Calu3 (cell line): ENCODE measurements at regions of chr5 and their contacts with region 1.

Region 1: DNA sequence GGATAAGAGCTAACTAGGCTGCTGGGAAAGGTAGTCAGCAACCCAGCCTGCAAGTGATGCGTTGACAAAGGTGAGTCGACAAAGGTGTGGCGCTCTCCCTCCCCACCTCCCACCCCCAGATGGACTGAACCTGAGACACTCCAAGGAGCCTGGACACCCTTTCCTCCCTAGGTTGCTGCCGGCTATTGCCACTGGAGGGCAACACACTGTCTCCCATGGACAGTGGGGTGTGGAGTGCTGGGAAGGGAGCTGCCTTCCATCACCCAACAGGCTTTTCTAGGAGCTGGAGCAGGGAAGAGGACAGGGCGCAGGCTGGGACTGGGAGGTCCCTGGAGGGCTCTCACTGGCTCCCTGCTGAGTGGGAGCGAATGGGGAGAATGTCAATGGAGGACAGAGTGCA is 75.4 kb upstream of the ARAP3 start:
- DNase-seq: peak; percentile 75
- H3K4me3 Mint-ChIP-seq: no peak overlapping the region
- H3K27ac Mint-ChIP-seq: peak overlapping the region; percentile 9
- H3K4me1 Mint-ChIP-seq: peaks cover 20% of the 10 kb centered on the region
- H3K27me3 Mint-ChIP-seq: peaks cover 61% of the 10 kb centered on the region
- CTCF ChIP-seq: peak; percentile 50

Region 2: GRCh38 chr5:141182248-141182647 is 575.2 kb before region 1 on chr5 and contains the start of gene PCDHB16:
- CTCF ChIA-PET with region 1: no interaction called
- intact Hi-C with region 1: no loop called
- DNase-seq: no peak
- H3K4me3 Mint-ChIP-seq: no peak within 1 kb of the TSS
- H3K27ac Mint-ChIP-seq: no peak within 1 kb of the TSS
- H3K4me1 Mint-ChIP-seq: no peaks in the 10 kb centered on the region
- H3K27me3 Mint-ChIP-seq: no peaks in the 10 kb centered on the region
- CTCF ChIP-seq: no peak
- total RNA-seq, gene PCDHB16: 0.35 and 0.66 TPM in 2 replicates

Region 3: DNA sequence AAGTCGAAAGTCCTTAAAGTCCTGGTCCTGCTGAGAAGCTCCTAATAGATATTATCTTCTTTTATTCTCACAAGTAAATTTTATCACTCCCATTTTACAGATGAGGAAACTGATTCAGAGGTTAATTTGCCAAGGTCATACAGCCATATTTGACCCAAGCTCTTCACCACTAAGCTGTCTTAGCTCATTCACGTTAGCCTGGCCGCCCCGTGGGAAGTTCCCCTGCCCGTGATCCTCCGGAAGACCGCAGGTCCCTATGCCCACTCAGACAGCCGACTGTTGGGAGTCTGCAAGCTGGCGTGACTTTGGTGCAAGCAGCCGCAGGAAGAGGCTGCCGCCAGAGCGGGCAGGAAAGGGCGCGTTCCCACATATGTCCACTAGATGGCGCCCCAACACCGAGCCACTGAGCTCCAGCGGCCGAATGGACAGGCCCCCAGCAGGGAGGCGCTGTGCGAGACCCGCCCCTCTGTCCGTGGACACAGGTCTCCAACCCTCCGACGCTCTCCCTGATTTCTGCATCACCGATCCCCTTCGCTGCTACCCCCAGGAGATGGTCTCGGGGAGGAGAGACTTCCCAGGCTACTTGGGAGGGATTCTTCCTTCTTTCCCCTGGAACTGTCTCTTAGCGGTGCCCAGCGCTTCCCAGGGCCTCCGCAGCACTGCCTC is 65.4 kb before region 1 on chr5:
- CTCF ChIA-PET with region 1: interaction called, 11 read pairs
- intact Hi-C with region 1: no loop called
- DNase-seq: peak; percentile 95
- H3K4me3 Mint-ChIP-seq: peak overlapping the region; percentile 69
- H3K27ac Mint-ChIP-seq: no peak overlapping the region
- H3K4me1 Mint-ChIP-seq: peaks cover 35% of the 10 kb centered on the region
- H3K27me3 Mint-ChIP-seq: peaks cover 47% of the 10 kb centered on the region
- CTCF ChIP-seq: peak; percentile 97

Region 4: GRCh38 chr5:141701360-141702119 is 55.9 kb before region 1 on chr5:
- CTCF ChIA-PET with region 1: interaction called, 4 read pairs
- intact Hi-C with region 1: loop called (anchors 5 kb)
- DNase-seq: no peak
- H3K4me3 Mint-ChIP-seq: peak overlapping the region; percentile 58
- H3K27ac Mint-ChIP-seq: no peak overlapping the region
- H3K4me1 Mint-ChIP-seq: peaks cover 2% of the 10 kb centered on the region
- H3K27me3 Mint-ChIP-seq: peaks cover 51% of the 10 kb centered on the region
- CTCF ChIP-seq: no peak

Region 5: DNA sequence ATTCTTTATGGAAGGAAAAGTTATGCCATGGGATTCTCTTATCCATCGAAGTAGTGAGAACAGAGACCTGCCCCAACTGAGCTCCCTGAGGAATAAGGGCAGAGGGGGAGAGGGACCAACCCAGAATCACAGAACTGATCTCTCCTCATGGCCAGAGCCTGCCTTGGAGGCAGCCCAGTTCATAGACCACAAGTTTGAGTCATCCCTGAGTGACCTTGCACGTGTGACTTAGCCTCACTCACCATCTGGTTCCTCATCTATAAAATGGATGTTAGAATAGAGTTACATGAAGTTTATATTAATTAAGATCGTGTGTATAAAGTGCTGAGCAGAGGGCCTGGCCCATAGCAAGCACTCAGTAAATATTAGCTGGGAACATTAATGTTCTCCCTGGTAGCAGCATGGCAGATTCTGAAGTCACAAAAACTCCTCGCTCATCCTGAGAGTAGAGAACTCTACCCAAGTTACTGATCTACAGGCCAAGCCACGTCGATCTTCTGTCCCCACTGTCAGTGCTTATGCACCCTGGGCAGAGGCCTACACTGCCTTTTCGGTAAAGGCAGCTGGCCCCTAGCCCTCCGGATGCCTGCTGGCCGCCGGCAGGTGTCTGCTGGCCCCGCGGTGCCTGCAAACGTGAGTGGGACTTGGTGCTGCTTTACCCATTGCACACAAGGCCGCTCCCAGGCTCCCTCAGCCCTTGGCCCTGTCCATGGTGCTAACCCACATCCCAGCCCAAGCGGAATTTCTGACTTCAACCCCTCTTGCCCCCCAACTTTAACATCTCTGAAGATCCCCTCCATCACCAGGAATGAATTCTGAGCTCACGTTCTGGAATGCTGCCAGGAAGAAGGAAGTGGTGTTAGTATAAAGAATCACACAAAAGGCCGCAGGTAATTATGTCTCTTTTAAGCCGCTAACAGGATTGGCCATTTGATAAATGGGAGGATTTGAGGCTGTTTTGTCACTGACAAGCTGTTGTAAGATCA is 14.2 kb before region 1 on chr5:
- CTCF ChIA-PET with region 1: interaction called, 8 read pairs
- intact Hi-C with region 1: loop called (anchors 1 kb)
- DNase-seq: peak; percentile 72
- H3K4me3 Mint-ChIP-seq: no peak overlapping the region
- H3K27ac Mint-ChIP-seq: no peak overlapping the region
- H3K4me1 Mint-ChIP-seq: no peaks in the 10 kb centered on the region
- H3K27me3 Mint-ChIP-seq: peaks cover 85% of the 10 kb centered on the region
- CTCF ChIP-seq: no peak

Region 6: GRCh38 chr5:141811287-141812155 is 54.1 kb after region 1 on chr5:
- CTCF ChIA-PET with region 1: interaction called, 4 read pairs
- intact Hi-C with region 1: loop called (anchors 2 kb)
- DNase-seq: peak; percentile 23
- H3K4me3 Mint-ChIP-seq: no peak overlapping the region
- H3K27ac Mint-ChIP-seq: no peak overlapping the region
- H3K4me1 Mint-ChIP-seq: no peaks in the 10 kb centered on the region
- H3K27me3 Mint-ChIP-seq: peaks cover 40% of the 10 kb centered on the region
- CTCF ChIP-seq: peak; percentile 70

Region 7: DNA sequence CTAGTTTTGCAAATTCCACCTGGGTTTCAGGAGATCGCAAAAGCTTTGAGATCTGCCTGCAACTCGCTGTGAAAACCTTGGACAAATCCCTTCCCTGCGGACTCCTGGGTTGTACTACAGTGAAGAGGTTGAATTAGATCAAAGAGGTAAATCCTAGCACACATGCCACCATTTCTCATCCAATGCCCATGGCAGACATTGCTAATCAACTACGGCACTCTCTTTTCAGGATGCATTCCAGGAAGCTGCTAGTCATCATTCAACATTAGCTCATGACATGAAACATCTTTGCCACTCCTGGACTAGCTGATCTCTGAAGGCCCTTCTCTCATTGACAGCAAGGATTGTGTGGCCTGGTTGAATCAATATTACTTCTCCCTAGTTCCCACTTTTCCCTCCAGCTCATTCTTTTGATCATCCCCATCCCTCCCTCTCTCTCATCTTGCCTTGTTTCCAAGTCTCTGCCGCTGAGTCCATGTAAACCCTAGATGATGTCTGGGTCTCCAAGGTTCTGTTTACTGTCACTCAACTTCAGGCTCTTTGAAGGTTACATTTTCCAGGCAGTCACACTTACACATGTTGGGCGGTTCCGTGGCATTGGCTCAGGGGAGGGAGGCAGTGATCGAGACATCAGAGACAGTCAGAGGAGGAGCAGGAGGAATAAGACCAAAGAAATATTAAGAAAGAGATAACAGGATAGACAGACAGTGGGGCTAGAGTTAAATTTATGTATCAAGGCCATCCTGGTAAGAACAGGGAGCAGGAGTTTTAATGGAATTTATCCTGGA is 74.9 kb after region 1 on chr5:
- CTCF ChIA-PET with region 1: no interaction called
- intact Hi-C with region 1: loop called (anchors 5 kb)
- DNase-seq: no peak
- H3K4me3 Mint-ChIP-seq: no peak overlapping the region
- H3K27ac Mint-ChIP-seq: peak overlapping the region; percentile 61
- H3K4me1 Mint-ChIP-seq: peaks cover 32% of the 10 kb centered on the region
- H3K27me3 Mint-ChIP-seq: no peaks in the 10 kb centered on the region
- CTCF ChIP-seq: no peak

Region 8: DNA sequence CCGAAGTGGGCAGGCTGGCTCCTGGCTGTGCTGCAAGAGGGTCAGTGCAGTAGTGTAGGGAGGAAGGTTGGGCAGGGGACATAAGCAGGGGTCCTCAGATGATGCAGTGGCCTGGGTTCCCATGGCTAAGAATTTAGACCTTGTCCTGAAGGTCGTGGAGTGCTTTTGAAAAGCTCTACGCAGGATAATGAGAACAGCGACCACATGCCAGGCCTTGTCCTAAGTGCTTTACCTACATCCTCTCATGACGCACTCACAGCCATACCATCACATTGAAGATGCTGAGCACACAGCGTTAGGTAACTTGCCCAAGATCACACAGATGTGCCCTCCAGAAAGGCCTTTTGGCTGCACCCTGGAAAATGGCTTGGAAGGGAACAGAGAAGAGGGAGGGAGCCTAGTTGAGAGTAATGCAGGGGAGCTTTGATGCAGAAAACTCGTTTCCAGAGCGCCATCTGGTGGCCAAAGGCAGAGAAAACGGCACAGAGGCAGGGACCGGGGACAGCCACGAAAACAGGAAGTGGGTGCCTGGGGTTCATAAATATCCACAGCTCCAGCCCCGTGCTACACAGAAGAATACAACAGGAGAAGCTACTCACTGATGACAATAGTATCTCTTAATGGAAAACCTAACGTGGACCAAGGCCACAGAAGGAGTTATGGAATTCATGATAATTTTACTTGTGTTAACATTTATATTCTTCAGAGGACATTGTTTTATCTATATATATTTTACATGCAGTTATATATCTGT is 203.2 kb after region 1 on chr5:
- CTCF ChIA-PET with region 1: interaction called, 20 read pairs
- intact Hi-C with region 1: no loop called
- DNase-seq: peak; percentile 91
- H3K4me3 Mint-ChIP-seq: no peak overlapping the region
- H3K27ac Mint-ChIP-seq: no peak overlapping the region
- H3K4me1 Mint-ChIP-seq: no peaks in the 10 kb centered on the region
- H3K27me3 Mint-ChIP-seq: peaks cover 14% of the 10 kb centered on the region
- CTCF ChIP-seq: peak; percentile 86